Left ventricle myocardium inferior (tissue), 1 donor: ENCODE measurements at regions of chr9 and their contacts with region 1.

Region 1: DNA sequence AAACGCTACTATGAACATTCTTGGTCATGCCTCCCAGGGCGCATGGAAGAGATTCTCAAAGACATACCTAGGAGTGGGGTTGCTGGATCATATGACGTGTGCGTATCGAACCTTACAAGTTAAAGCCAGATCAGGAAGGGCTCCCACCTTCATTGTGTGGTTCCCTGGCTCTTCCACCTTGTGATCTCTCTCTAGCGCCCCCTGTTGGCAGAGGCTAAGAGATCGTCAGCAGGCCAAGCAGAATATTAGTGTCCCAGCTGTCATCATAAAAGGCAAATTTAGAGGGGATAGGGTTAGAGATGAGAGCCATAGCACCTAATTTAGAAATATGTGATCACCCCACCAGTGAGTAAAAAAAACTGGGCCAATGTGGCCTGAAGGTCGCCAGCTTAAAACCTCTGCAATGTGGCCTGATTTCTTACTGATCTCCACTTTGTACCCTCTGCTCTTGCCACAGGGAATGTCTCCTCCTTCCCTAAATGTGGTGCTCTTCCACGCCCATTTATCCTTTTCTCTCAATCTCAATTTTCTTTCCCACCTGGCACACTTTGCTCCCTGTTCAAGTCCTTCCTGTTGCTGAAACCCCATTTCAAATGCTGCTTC is 91.7 kb upstream of the SHB start:
- DNase-seq: peak; percentile 36
- H3K4me3 ChIP-seq: no peak overlapping the region
- H3K27ac ChIP-seq: no peak overlapping the region
- H3K4me1 ChIP-seq: no peaks in the 10 kb centered on the region
- H3K27me3 ChIP-seq: no peaks in the 10 kb centered on the region
- CTCF ChIP-seq: peak; percentile 89

Region 2: GRCh38 chr9:37913480-37914153 is 247.1 kb before region 1 on chr9:
- intact Hi-C with region 1: loop called (anchors 5 kb)
- DNase-seq: peak; percentile 67
- H3K4me3 ChIP-seq: no peak overlapping the region
- H3K27ac ChIP-seq: no peak overlapping the region
- H3K4me1 ChIP-seq: peaks cover 48% of the 10 kb centered on the region
- H3K27me3 ChIP-seq: no peaks in the 10 kb centered on the region
- CTCF ChIP-seq: peak; percentile 98

Region 3: GRCh38 chr9:38088006-38088925 is 72.4 kb before region 1 on chr9:
- intact Hi-C with region 1: loop called (anchors 10 kb)
- DNase-seq: peak; percentile 74
- H3K4me3 ChIP-seq: no peak overlapping the region
- H3K27ac ChIP-seq: no peak overlapping the region
- H3K4me1 ChIP-seq: peaks cover 19% of the 10 kb centered on the region
- H3K27me3 ChIP-seq: no peaks in the 10 kb centered on the region
- CTCF ChIP-seq: peak; percentile 97